HepG2 (cell line): ENCODE measurements at regions of chr9 and their contacts with region 1.

Region 1: GRCh38 chr9:108565651-108566378 is 290.0 kb downstream of the ACTL7B start:
- DNase-seq: peak; percentile 76
- ATAC-seq: peak; percentile 95
- H3K4me3 ChIP-seq: no peak overlapping the region
- H3K27ac ChIP-seq: no peak overlapping the region
- H3K4me1 ChIP-seq: peaks cover 18% of the 10 kb centered on the region
- H3K27me3 ChIP-seq: peaks cover 0 to 4% of the 10 kb centered on the region in 2 experiments; a peak in 1 of 5 replicates
- CTCF ChIP-seq: peak; percentile 90
- EP300 ChIP-seq: no peak
- POLR2A ChIP-seq: no peak
- RAD21 ChIP-seq: peak; percentile 85

Region 2: GRCh38 chr9:107484117-107484723 is 1081.6 kb before region 1 on chr9:
- CTCF ChIA-PET with region 1: no interaction called
- POLR2A ChIA-PET with region 1: no interaction called
- in situ Hi-C with region 1: loop called (anchors 25 kb)
- intact Hi-C with region 1: loop called (anchors 1 kb)
- DNase-seq: peak; percentile 68
- ATAC-seq: peak; percentile 82
- H3K4me3 ChIP-seq: no peak overlapping the region
- H3K27ac ChIP-seq: no peak overlapping the region
- H3K4me1 ChIP-seq: no peaks in the 10 kb centered on the region
- H3K27me3 ChIP-seq: peaks cover 0 to 13% of the 10 kb centered on the region in 2 experiments; a peak in 3 of 5 replicates
- CTCF ChIP-seq: peak; percentile 72
- EP300 ChIP-seq: no peak
- POLR2A ChIP-seq: no peak
- RAD21 ChIP-seq: peak; percentile 48; the same call in 1 of the 2 replicates

Region 3: DNA sequence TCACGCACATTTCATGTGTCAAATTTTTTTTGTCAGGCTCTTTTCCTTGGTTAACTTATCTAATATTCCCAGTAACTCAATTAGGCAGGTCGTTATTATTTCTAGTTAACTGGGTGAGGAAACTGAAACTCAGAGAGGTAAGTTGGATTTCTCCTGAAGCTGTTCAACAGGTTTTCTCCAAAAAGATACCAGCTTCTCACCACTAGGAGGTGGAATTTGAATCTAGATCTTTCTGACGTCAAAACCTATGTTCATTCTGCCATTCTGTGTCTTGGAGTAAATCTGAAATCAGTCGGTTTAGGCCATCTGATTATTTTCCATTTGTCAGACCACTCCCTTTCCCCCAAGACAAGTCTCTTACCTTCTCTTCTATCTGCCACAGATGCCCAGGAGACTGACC is 282.9 kb before region 1 on chr9:
- CTCF ChIA-PET with region 1: interaction called, 7 read pairs
- POLR2A ChIA-PET with region 1: no interaction called
- in situ Hi-C with region 1: loop called (anchors 5 kb)
- intact Hi-C with region 1: loop called (anchors 1 kb)
- DNase-seq: peak; percentile 6
- ATAC-seq: no peak
- H3K4me3 ChIP-seq: no peak overlapping the region
- H3K27ac ChIP-seq: no peak overlapping the region
- H3K4me1 ChIP-seq: no peaks in the 10 kb centered on the region
- H3K27me3 ChIP-seq: 0 out of 5 replicates have a peak, but pooled peaks cover 0 to 1% of the 10 kb centered on the region in 2 experiments
- CTCF ChIP-seq: 0 out of 2 replicates have a peak, but pooled peaks have one; percentile 12
- EP300 ChIP-seq: no peak
- POLR2A ChIP-seq: no peak
- RAD21 ChIP-seq: no peak

Region 4: DNA sequence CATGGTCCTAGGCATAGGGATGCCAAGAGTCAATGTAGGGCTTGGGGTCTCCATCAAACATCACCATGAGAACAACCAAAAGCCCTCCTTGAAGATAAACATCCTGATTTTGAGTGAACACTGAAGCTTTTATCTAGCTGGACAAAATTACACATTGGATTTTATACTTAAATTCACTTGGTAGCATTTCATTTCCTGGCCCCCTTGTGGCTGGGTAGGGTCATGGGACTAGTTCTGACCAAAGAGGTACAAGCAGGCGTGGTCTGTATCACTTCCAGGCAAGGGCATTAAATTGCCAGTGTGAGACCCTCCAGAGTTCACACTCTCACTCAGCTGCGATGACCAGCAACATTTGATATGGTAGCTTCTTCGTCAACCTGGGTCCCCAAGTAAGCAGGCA is 30.3 kb before region 1 on chr9:
- CTCF ChIA-PET with region 1: no interaction called
- POLR2A ChIA-PET with region 1: no interaction called
- in situ Hi-C with region 1: no loop called
- intact Hi-C with region 1: loop called (anchors 1 kb)
- DNase-seq: peak; percentile 9
- ATAC-seq: peak; percentile 77
- H3K4me3 ChIP-seq: no peak overlapping the region
- H3K27ac ChIP-seq: no peak overlapping the region
- H3K4me1 ChIP-seq: no peaks in the 10 kb centered on the region
- H3K27me3 ChIP-seq: no peaks in the 10 kb centered on the region; a peak in 1 of 5 replicates
- CTCF ChIP-seq: peak; percentile 48
- EP300 ChIP-seq: no peak
- POLR2A ChIP-seq: no peak
- RAD21 ChIP-seq: no peak

Region 5: GRCh38 chr9:108813951-108814601 is 248.3 kb after region 1 on chr9:
- CTCF ChIA-PET with region 1: interaction called, 4 read pairs
- POLR2A ChIA-PET with region 1: no interaction called
- in situ Hi-C with region 1: no loop called
- intact Hi-C with region 1: loop called (anchors 5 kb)
- DNase-seq: peak; percentile 58
- ATAC-seq: peak; percentile 74
- H3K4me3 ChIP-seq: no peak overlapping the region
- H3K27ac ChIP-seq: no peak overlapping the region
- H3K4me1 ChIP-seq: peaks cover 62% of the 10 kb centered on the region
- H3K27me3 ChIP-seq: no peaks in the 10 kb centered on the region
- CTCF ChIP-seq: peak; percentile 68
- EP300 ChIP-seq: no peak
- POLR2A ChIP-seq: no peak
- RAD21 ChIP-seq: peak; percentile 63; the same call in 1 of the 2 replicates